CD8-positive, alpha-beta memory T cell (primary cell): ENCODE measurements at regions of chr16 and their contacts with region 1.

Region 1: GRCh38 chr16:81006814-81007696 is at the starts of genes CENPN and CMC2:
- DNase-seq: peak; percentile 96 to 100 (median 99)
- H3K4me3 ChIP-seq: peak within 1 kb of the TSS; percentile 77
- H3K4me3 Mint-ChIP-seq: peak within 1 kb of the TSS; percentile 89 to 99 (median 92)
- H3K27ac ChIP-seq: peak within 1 kb of the TSS; percentile 94
- H3K27ac Mint-ChIP-seq: peak within 1 kb of the TSS; percentile 95 to 100 (median 100)
- H3K4me1 ChIP-seq: peaks cover 25% of the 10 kb centered on the region
- H3K4me1 Mint-ChIP-seq: peaks cover 39 to 55% (median 49%) of the 10 kb centered on the region in 3 donors
- H3K27me3 ChIP-seq: no peaks in the 10 kb centered on the region
- H3K27me3 Mint-ChIP-seq: peaks cover 0 to 10% of the 10 kb centered on the region in 2 donors
- total RNA-seq, gene CENPN: 52.2 to 53.7 TPM
- total RNA-seq, gene CMC2: 125 to 126 TPM

Region 2: DNA sequence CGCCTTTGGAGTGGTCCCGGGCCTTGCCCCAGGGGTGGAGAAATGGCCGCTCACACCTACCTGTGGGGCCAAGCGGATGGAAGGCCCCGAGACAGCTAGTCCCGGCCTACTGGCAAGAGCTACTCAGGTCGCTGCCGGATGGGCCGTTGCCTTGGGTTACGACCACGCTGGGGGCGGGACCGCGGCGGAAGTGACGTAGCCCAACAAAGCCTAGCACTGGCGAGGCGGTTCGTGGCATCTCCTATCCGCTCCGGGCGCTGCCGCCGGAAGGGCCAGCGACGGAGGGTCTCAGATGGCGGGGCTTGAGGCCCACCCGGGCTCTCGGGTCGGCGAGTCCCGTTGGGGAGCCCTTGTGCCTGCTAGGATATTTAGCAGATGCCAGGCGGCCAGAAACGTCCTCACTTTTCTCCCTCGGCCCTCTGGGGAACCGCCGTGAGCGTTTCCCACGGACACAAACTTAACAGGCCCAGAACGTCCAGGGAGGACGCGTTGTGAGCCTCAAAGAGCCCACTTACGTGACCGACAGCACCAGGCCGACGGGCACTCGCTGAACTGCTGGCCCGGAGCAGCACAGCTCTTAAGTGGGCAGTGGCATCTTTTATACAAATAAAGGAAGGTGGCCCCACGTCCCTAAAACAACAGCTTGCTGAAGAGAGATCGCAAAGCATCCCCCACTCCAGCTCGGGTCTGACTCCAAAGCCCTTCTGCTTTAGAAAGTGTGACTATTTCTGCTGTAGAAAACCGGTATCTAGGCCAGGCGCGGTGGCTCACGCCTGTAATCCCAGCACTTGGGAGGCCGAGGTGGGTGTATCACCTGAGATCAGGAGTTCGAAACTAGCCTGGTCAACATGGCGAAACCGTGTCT is 70.3 kb after region 1 on chr16 and contains the start of gene C16orf46:
- CTCF ChIA-PET with region 1: interaction called, 3 read pairs
- POLR2A ChIA-PET with region 1: interaction called, 15 read pairs
- DNase-seq: peak; percentile 94 to 98 (median 96)
- H3K4me3 ChIP-seq: peak within 1 kb of the TSS; percentile 79
- H3K4me3 Mint-ChIP-seq: peak within 1 kb of the TSS in 3 of 7 donors; percentile 27 to 39 (median 38)
- H3K27ac ChIP-seq: peak within 1 kb of the TSS; percentile 95
- H3K27ac Mint-ChIP-seq: peak within 1 kb of the TSS in 2 of 8 donors; percentile 17 to 52
- H3K4me1 ChIP-seq: peaks cover 10% of the 10 kb centered on the region
- H3K4me1 Mint-ChIP-seq: peaks cover 3 to 5% (median 4%) of the 10 kb centered on the region in 3 donors
- H3K27me3 ChIP-seq: no peaks in the 10 kb centered on the region
- H3K27me3 Mint-ChIP-seq: peaks cover 0 to 2% of the 10 kb centered on the region in 2 donors
- total RNA-seq, gene C16orf46: 0.59 TPM in 1 of 2 experiments, not detected in the other